ENCODE measurements at regions of chr11 and their contacts with region 1.

Region 1: DNA sequence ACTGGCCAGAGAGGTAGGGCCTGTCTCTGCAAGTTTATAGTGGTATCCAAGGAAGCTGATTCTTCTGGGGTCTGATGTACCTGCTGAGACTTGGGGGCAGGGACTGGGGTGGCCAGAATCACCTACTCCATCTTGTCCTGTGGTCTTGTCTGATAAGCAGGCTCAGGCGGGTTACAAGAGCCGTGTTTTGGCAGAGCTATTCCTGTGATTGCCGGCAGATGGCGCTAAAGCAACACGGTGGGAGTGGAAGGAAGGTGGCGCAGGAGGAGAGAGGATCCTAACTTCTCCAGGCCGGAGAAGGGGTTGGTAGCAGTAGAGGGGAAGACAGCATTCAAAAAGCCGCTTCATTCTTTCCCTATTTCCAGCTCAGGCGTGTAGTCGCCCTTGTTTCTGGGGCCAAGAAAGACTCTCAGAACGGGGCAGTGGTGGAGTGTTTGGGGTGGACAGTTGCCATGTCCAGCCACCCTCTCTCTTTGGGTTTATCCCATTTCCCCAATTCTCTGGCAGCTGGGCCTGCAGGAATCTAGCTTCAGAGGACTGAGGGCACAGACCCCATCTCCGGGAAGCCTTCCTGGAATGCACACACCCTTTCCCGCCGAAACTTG is 15.1 kb downstream of the CHRM1 start:
- DNase-seq: peak; percentile 68 to 89 (median 85)
- H3K4me3 ChIP-seq: no peak overlapping the region
- H3K27ac ChIP-seq: peak overlapping the region in 50 of 59 donors; percentile 0 to 82 (median 50)
- H3K27me3 ChIP-seq: no peaks in the 10 kb centered on the region
- CTCF ChIP-seq: peak; percentile 87 to 100 (median 98)

Region 2: DNA sequence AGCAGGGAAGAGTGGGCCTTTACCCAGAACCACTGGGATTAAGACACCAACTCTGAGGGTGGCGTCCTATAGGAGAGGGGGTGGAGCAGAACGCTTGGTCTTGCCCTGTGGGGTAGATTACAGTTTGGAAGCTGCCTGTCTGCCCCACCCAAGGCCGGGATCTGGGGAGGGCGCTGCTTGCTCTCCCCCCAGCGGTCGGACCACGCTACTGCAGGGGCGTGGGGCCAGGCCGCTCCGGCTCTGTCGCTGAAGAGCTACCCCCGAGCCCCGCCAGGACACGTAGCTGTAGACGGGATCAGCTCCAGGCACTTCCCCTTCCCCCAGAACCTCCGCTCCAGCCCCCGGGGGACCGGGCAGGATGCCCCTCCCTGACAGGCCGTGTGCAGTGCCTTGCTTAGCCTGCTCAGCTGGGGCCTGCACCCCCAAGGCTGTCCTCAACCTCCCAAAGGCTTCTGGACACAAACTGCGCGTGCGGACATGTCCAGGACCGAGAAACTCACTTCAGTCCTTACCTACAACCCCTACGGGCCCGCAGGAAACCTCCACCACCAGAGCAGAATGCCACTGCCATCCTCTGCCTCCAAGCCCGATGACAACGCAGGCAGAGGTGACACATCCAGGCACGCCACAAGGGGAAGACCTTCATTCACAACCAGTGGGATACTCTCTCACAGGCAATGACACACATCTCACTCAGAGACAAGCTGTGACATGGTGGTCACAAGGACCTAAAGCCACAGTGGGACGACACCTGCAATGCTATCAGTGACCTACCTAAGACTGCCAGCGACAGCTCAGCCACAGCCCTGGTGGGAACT is 363.1 kb before region 1 on chr11:
- intact Hi-C with region 1: no loop called
- DNase-seq: peak in 7 of 10 donors; percentile 38 to 82 (median 60)
- H3K4me3 ChIP-seq: peak overlapping the region in 51 of 59 donors; percentile 1 to 79 (median 65)
- H3K27ac ChIP-seq: peak overlapping the region in 54 of 59 donors; percentile 2 to 92 (median 69)
- H3K27me3 ChIP-seq: peaks cover 0 to 39% (median 27%) of the 10 kb centered on the region in 45 donors
- CTCF ChIP-seq: peak; percentile 75 to 100 (median 97)

Region 3: DNA sequence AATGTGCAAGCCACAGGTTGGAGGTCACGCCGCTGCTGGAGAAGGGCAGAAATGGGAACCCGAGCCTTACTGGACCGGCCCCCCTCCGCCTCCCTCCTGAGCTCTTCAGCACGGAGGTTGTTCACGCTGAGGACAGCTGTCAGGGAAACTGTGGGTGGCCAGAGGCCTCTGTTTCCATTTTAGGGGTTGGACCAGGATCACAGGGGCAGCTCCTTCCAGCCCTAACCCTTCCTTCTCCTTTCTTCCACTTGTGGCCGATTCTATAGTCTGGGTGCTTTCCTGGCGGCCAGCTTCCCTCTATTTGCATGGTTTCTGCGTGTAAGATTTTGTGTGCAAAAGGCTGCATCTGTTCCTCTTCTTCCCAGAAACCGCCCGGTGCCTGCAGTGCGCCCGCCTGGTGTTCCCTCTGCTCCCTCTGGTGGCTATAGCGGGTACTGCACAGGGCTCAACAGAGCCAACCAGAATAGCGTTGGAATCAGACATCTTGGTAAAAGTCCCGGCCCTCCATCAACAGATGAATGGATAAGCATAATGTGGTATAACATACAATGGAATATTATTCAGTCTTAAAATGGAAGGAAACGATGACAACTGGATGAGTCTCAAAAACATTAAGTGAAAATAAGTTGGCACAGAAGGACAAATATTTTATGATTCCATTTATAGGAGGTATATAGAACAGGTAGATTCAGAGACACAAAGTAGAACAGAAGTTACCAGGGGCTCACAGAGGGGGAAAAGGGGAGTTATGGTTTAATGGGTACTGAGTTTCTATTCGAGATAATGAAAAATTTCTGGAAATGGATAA is 118.0 kb after region 1 on chr11:
- intact Hi-C with region 1: loop called (anchors 1 to 2 kb)
- DNase-seq: peak; percentile 83 to 96 (median 92)
- H3K4me3 ChIP-seq: peak overlapping the region in 16 of 59 donors; percentile 4 to 35 (median 16)
- H3K27ac ChIP-seq: peak overlapping the region in 57 of 59 donors; percentile 3 to 92 (median 75)
- H3K27me3 ChIP-seq: no peaks in the 10 kb centered on the region
- CTCF ChIP-seq: peak in 55 of 56 donors; percentile 99 to 100 (median 100)

Region 4: DNA sequence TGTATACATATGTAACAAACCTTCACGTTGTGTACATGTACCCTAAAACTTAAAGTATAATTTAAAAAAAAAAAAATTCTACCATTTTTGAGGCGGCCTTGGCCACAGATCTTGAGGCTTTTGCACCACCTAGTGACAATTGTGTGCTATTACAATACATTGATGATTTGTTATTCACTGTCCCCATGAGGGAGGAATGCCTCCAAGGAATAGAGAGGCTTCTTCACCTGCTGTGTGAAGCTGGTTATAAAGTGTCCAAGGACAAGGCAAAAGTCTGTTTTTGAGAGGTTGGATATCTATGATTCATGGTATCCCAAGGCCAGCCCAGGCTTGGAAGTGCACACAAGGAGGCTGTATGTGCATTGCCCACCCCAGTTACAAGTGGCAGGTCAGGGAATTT is 306.7 kb after region 1 on chr11:
- intact Hi-C with region 1: loop called (anchors 5 to 10 kb)
- DNase-seq: no peak
- H3K4me3 ChIP-seq: no peak overlapping the region
- H3K27ac ChIP-seq: no peak overlapping the region
- H3K27me3 ChIP-seq: no peaks in the 10 kb centered on the region
- CTCF ChIP-seq: peak in 53 of 56 donors; percentile 11 to 65 (median 44)

Measured in dorsolateral prefrontal cortex (tissue), 120 donors.